Activated B cell treated with CpG ODN at 0.5 μM for 24 hours (primary cell): ENCODE measurements at regions of chr11 and their contacts with region 1.

Region 1: GRCh38 chr11:68825571-68825970 is 16.1 kb downstream of the CPT1A start:
- DNase-seq: peak; percentile 50
- ATAC-seq: peak; percentile 77
- H3K4me3 Mint-ChIP-seq: no peak overlapping the region
- H3K27ac Mint-ChIP-seq: no peak overlapping the region
- H3K4me1 Mint-ChIP-seq: peaks cover 45% of the 10 kb centered on the region
- H3K27me3 Mint-ChIP-seq: no peaks in the 10 kb centered on the region
- CTCF ChIP-seq: no peak

Region 2: GRCh38 chr11:68480852-68481510 is 344.6 kb before region 1 on chr11:
- CTCF ChIA-PET with region 1: no interaction called
- POLR2A ChIA-PET with region 1: no interaction called
- intact Hi-C with region 1: no loop called
- DNase-seq: no peak
- ATAC-seq: no peak
- H3K4me3 Mint-ChIP-seq: no peak overlapping the region
- H3K27ac Mint-ChIP-seq: no peak overlapping the region
- H3K4me1 Mint-ChIP-seq: peaks cover 71% of the 10 kb centered on the region
- H3K27me3 Mint-ChIP-seq: no peaks in the 10 kb centered on the region
- CTCF ChIP-seq: no peak

Region 3: DNA sequence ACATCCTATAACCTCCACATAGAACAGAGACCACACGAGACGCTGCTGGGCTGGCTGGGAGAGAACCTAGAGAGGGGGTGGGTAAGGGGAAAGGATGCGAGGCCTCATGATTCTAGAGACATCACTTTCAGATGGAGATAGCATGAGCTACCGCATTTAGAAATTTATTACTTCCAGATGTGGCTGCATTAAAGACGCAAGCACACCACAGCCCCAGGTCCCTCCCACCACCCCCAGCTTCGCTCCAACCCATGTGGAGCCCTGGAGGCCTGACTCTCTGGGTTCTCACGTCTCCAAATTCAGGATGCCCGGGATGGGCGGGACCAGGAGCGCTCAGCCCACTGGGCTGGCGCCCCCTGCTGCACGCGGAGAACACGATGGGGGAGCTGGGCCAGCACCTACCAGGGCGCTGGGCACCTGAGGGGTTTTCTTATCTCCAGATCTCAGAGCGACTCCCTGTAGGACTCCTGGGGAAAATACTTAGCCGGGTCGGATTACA is 64.4 kb after region 1 on chr11:
- CTCF ChIA-PET with region 1: no interaction called
- POLR2A ChIA-PET with region 1: no interaction called
- intact Hi-C with region 1: loop called (anchors 2 kb)
- DNase-seq: no peak
- ATAC-seq: no peak
- H3K4me3 Mint-ChIP-seq: no peak overlapping the region
- H3K27ac Mint-ChIP-seq: no peak overlapping the region
- H3K4me1 Mint-ChIP-seq: no peaks in the 10 kb centered on the region
- H3K27me3 Mint-ChIP-seq: no peaks in the 10 kb centered on the region
- CTCF ChIP-seq: no peak